Activated CD4-positive, alpha-beta T cell treated with anti-CD3 and anti-CD28 coated beads for 36 hours (primary cell): ENCODE measurements at regions of chr9 and their contacts with region 1.

Region 1: GRCh38 chr9:127970401-127971313 is 10.1 kb downstream of the EEIG1 start:
- DNase-seq: peak; percentile 87
- ATAC-seq: peak; percentile 76
- H3K4me3 Mint-ChIP-seq: peak overlapping the region; percentile 69
- H3K27ac Mint-ChIP-seq: peak overlapping the region; percentile 92
- H3K4me1 Mint-ChIP-seq: peaks cover 97% of the 10 kb centered on the region
- H3K27me3 Mint-ChIP-seq: no peaks in the 10 kb centered on the region

Region 2: GRCh38 chr9:127921557-127922120 is 49.0 kb before region 1 on chr9:
- CTCF ChIA-PET with region 1: no interaction called
- POLR2A ChIA-PET with region 1: no interaction called
- intact Hi-C with region 1: no loop called
- DNase-seq: peak; percentile 88
- ATAC-seq: peak; percentile 39
- H3K4me3 Mint-ChIP-seq: peak overlapping the region; percentile 16
- H3K27ac Mint-ChIP-seq: no peak overlapping the region
- H3K4me1 Mint-ChIP-seq: peaks cover 38% of the 10 kb centered on the region
- H3K27me3 Mint-ChIP-seq: peaks cover 5% of the 10 kb centered on the region

Region 3: GRCh38 chr9:127937388-127938280 is 33.0 kb before region 1 on chr9 and contains the start of gene DPM2:
- CTCF ChIA-PET with region 1: interaction called, 5 read pairs
- POLR2A ChIA-PET with region 1: no interaction called
- intact Hi-C with region 1: loop called in 1 of 2 experiments (anchors 5 kb)
- DNase-seq: peak; percentile 93
- ATAC-seq: peak; percentile 92
- H3K4me3 Mint-ChIP-seq: peak within 1 kb of the TSS; percentile 94
- H3K27ac Mint-ChIP-seq: peak within 1 kb of the TSS; percentile 93
- H3K4me1 Mint-ChIP-seq: peaks cover 34% of the 10 kb centered on the region
- H3K27me3 Mint-ChIP-seq: no peaks in the 10 kb centered on the region
- total RNA-seq, gene DPM2: 44.1 to 46.6 TPM